ENCODE measurements at regions of chr1 and their contacts with region 1.

Region 1: GRCh38 chr1:161021165-161021960 is 411 bp upstream of the F11R start:
- DNase-seq: peak; percentile 74
- H3K4me3 Mint-ChIP-seq: peak overlapping the region; percentile 91
- H3K27ac Mint-ChIP-seq: peak overlapping the region; percentile 83
- H3K4me1 Mint-ChIP-seq: peaks cover 38% of the 10 kb centered on the region
- H3K27me3 Mint-ChIP-seq: no peaks in the 10 kb centered on the region

Region 2: GRCh38 chr1:161045750-161046571 is 24.6 kb after region 1 on chr1 and contains the start of gene USF1:
- intact Hi-C with region 1: loop called (anchors 1 kb)
- DNase-seq: peak; percentile 92
- H3K4me3 Mint-ChIP-seq: peak within 1 kb of the TSS; percentile 95
- H3K27ac Mint-ChIP-seq: peak within 1 kb of the TSS; percentile 100
- H3K4me1 Mint-ChIP-seq: peaks cover 33% of the 10 kb centered on the region
- H3K27me3 Mint-ChIP-seq: no peaks in the 10 kb centered on the region
- total RNA-seq, gene USF1: 49.1 and 53.2 TPM in 2 replicates

Measured in activated T-helper 2 cell treated with anti-CD3 and anti-CD28 coated beads, Interferon-gamma antibody, Interleukin-2, Interleukin-4, amounts not matched to agents 10 μg/mL and 5 μg/mL and 100 μg/mL, durations not matched to agents 14 hours and 24 hours and 36 hours (primary cell).